ENCODE measurements at regions of chrX and their contacts with region 1.

Region 1: GRCh38 chrX:100413229-100413628 is 3.2 kb upstream of the PCDH19 start:
- DNase-seq: peak in 2 of 5 donors; percentile 24 to 48
- ATAC-seq: peak in 3 of 4 donors; percentile 57 to 65 (median 63)
- H3K4me3 ChIP-seq: no peak overlapping the region
- H3K27ac ChIP-seq: no peak overlapping the region
- H3K4me1 ChIP-seq: peaks cover 0 to 20% (median under 1%) of the 10 kb centered on the region in 12 donors
- H3K27me3 ChIP-seq: peaks cover 0 to 67% (median 2%) of the 10 kb centered on the region in 9 donors
- CTCF ChIP-seq: peak; percentile 34 to 65 (median 48)
- POLR2A ChIP-seq: no peak

Region 2: GRCh38 chrX:100368167-100368566 is 45.1 kb before region 1 on chrX:
- intact Hi-C with region 1: loop called in 1 of 10 experiments (anchors 5 kb)
- DNase-seq: no peak
- ATAC-seq: no peak
- H3K4me3 ChIP-seq: no peak overlapping the region
- H3K27ac ChIP-seq: no peak overlapping the region
- H3K4me1 ChIP-seq: no peaks in the 10 kb centered on the region
- H3K27me3 ChIP-seq: peaks cover 0 to 26% (median 0%) of the 10 kb centered on the region in 9 donors
- CTCF ChIP-seq: peak in 7 of 12 donors; percentile 8 to 33 (median 23)
- POLR2A ChIP-seq: no peak

Region 3: DNA sequence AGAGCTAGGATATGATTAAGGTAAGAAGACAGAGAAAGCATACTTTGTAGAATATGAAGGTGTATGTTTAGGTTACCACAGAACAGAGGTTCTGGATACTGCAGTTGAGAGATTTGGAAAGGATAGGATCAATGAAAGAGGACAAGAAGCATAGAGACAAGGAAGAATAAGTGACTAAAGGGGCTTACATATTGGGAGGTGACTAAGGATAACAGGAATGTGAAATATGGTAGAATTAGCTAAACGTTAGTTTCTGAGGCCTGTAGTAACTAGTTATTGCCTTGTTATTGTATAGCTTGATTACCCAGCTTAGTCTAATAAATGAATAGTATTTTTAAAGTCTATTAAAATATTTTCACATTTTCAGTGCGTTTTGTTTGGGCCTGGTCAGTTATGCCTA is 723.0 kb after region 1 on chrX:
- intact Hi-C with region 1: no loop called
- DNase-seq: no peak
- ATAC-seq: no peak
- H3K4me3 ChIP-seq: no peak overlapping the region
- H3K27ac ChIP-seq: no peak overlapping the region
- H3K4me1 ChIP-seq: no peaks in the 10 kb centered on the region
- H3K27me3 ChIP-seq: peaks cover 0 to 6% (median 0%) of the 10 kb centered on the region in 9 donors
- CTCF ChIP-seq: no peak
- POLR2A ChIP-seq: no peak

Measured in heart left ventricle (tissue), 16 donors.